GM10248 (cell line): ENCODE measurements at regions of chr6 and their contacts with region 1.

Region 1: DNA sequence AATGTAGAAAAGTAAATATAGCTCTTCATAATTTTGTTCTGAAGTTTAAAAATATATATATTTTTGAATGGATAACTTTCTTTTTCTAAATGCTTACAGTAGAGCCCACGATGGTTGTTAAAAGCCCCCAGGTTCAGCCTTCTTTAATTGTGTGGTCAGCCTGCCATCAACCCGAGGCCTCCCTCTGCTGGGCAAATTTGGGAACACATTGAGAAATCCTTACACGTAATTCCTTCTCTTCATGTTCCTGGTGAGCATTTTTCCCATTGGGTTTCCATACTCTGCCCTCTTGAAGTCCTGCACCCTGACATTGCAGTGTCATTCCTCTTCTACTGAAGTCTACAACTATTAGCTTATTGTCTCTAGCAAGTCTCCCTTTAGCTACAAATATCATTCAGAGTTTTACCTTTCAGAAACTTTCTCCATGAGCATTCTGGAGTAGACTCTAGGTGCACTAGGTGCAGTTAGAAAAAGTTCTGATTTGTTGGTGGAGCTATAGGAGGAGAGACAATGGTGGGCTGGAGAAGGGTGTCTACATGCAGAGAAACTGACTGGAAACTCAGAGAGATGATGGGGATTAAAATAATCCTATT is 40.6 kb downstream of the TRIM38 start:
- DNase-seq: peak; percentile 63
- CTCF ChIP-seq: peak; percentile 82

Region 2: GRCh38 chr6:25369433-25370181 is 633.6 kb before region 1 on chr6:
- CTCF ChIA-PET with region 1: no interaction called
- POLR2A ChIA-PET with region 1: no interaction called
- DNase-seq: no peak
- CTCF ChIP-seq: no peak

Region 3: DNA sequence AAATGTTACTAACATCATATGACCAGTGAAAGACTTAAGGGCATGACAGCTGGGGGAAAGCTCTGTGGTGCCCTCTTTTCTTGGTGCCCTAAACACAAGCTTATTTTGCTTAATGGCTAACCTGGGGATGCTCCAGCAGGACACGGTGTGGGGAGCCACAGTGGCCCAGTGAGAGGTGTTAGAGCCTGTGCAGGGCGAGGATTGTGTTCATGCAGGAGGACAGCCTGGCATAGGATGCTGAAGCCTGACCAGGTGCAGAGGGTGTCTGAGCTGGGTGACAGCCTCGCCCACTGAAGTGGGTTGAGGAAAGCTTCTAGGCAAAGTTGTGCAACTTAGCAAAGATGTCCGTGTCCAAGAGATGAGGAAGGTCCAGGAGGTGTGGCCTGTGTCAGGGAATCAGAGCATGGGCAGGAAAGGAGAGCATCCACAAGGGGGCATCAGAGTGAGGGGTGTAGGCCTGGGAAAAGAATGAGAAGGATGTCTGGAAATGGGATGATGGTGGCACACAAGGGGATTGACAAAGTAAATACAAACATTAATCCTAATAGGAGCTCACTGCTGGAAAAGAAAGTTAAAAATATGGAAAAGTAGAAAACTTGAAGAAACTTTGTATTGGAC is 214.8 kb before region 1 on chr6:
- CTCF ChIA-PET with region 1: interaction called, 14 read pairs
- POLR2A ChIA-PET with region 1: no interaction called
- DNase-seq: peak; percentile 22
- CTCF ChIP-seq: peak; percentile 46

Region 4: DNA sequence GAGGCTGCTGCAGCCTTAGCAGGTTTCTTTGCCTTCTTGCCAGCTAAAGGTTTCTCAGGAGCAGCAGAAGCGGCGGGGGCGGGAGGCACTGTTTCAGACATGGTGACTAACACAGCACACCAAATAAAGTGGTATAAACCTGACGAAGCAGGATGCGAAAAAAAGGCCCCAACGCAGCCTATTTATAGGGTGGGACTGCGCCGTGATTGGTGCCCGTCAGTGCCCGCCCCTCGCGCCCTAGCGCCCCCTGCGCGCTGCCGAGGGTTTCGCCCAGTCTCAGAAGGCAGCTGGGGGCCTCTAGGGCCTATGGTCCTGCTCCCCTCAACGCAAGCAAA is 14.4 kb after region 1 on chr6:
- CTCF ChIA-PET with region 1: interaction called, 163 read pairs
- POLR2A ChIA-PET with region 1: interaction called, 7 read pairs
- DNase-seq: no peak
- CTCF ChIP-seq: peak; percentile 45